ENCODE measurements at regions of chr12 and their contacts with region 1.

Region 1: DNA sequence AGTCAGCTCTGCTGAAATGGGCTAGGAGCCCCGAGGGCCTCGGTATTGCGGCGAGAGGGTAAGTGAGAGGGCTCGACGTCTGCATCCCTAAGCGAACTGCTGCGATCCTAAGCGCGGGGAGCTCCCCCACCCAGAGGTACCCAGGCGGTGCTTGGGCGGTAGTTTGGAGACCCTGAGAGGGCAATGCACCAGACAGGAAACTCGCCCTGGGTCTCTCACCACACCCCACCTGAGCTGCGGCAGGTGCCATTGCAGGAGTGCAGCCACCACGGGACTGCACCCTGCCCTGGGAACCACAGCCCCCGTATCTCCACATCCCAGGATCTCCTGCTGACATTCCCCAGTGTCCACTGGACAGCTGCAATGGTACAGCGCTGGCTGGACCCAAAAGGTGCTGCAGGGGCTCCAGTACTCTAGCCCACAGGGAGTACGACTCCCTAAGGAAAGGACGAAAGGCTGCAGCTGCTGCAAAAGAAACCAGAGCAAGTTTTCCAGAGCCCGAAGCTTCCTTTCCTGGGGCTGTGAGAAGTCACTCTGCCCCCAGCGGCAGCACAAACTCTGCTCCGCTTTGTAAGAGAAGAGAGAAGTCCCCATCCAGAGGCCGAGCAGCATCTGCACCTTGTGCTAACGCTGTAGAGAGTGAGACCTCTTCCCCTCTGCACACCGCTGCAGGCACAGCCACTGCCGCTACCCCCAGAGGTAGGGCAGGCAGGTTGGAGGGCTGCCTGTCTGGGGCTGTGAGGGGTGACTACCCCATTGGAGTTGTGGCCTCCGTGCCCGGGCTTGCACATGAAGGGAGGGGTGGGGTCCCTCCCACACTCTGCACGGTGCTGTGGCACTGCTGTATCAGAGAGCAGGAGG is 31.1 kb upstream of the MON2 start:
- DNase-seq: peak; percentile 81
- H3K4me3 ChIP-seq: peak overlapping the region; percentile 19 to 66 (median 44)
- H3K27ac ChIP-seq: no peak overlapping the region
- H3K4me1 ChIP-seq: peaks cover 6 to 22% (median 19%) of the 10 kb centered on the region in 6 donors
- H3K27me3 ChIP-seq: peaks cover 0 to 48% (median 6%) of the 10 kb centered on the region in 7 donors
- CTCF ChIP-seq: peak in 6 of 11 experiments; percentile 11 to 55 (median 38)
- POLR2A ChIP-seq: no peak

Region 2: DNA sequence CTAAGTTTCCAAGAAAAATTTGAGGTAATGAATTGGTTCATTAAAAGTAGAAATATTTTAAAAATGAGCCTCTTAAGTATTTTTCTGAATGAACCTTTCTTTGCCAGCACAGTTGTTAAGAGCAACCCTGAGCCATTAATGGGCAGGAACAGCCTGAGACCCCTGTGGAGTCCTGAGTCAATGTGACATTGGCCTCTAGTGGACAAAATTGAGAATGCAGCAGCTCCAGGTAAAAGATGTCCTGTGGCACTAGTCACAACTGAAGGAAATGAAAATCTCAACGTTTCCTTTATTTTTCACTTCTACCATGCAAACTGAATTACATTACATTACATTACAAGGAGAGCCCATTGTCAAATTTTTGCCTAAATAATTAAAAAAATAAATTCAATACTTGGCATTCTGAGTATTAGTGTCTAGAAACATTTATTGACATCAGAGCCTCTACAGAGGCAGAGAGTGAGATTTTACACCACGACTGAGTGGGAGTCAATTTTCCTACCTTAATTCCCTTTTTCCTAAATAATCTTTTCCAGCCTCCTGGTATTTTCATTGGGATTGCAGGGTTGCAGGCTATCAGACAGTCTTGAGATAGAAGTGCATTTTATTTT is 363.7 kb after region 1 on chr12:
- intact Hi-C with region 1: loop called (anchors 5 kb)
- DNase-seq: no peak
- H3K4me3 ChIP-seq: no peak overlapping the region
- H3K27ac ChIP-seq: no peak overlapping the region
- H3K4me1 ChIP-seq: peaks cover 0 to 2% (median 1%) of the 10 kb centered on the region in 6 donors
- H3K27me3 ChIP-seq: no peaks in the 10 kb centered on the region
- CTCF ChIP-seq: peak; percentile 77 to 92 (median 86)
- POLR2A ChIP-seq: no peak

Region 3: GRCh38 chr12:63163541-63163940 is 728.0 kb after region 1 on chr12:
- intact Hi-C with region 1: no loop called
- DNase-seq: no peak
- H3K4me3 ChIP-seq: no peak overlapping the region
- H3K27ac ChIP-seq: no peak overlapping the region
- H3K4me1 ChIP-seq: no peaks in the 10 kb centered on the region
- H3K27me3 ChIP-seq: no peaks in the 10 kb centered on the region
- CTCF ChIP-seq: no peak
- POLR2A ChIP-seq: no peak

Measured in spleen (tissue), 13 donors.